ENCODE measurements at regions of chr20 and their contacts with region 1.

Region 1: GRCh38 chr20:58870239-58871014 is 17.9 kb downstream of the GNAS start:
- DNase-seq: peak in 9 of 10 donors; percentile 50 to 94 (median 73)

Region 2: DNA sequence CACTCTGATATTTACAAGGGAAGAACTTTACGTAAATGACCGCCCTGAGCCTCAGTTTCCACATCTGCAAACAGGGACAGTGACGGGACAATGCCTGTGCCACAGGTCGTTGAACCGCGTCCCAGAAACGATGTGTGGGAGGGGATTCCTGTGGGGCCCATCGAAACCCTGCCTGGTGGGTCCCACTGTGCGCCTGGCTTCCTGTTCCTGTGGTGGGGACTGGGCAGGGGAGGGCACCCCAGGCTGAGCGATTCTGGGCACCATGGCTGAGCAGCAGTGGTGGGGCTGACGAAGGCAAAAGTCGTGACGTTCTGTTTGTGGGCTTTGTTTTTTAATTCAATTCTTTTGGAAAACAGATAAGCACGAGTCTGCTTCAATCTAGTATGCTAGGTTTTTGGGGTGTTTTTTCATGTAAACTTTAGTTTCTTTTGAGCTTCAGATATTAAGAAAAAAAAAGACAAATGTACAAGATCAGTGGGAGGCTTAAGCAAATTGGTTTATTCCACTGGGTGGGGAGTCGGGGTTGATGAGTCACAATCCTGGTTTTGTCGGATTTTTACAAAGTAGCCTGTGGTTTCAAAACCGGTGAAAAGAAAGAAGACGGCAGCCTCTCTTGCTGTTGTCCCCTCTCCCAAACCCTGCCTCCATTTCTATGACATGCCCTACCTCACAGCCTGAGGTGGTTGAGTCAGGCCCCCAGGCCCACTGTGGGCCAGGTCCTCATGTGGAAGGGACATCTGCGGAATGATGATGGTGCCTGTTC is 60.1 kb before region 1 on chr20:
- intact Hi-C with region 1: no loop called
- DNase-seq: peak in 3 of 10 donors; percentile 27 to 65 (median 30)

Region 3: DNA sequence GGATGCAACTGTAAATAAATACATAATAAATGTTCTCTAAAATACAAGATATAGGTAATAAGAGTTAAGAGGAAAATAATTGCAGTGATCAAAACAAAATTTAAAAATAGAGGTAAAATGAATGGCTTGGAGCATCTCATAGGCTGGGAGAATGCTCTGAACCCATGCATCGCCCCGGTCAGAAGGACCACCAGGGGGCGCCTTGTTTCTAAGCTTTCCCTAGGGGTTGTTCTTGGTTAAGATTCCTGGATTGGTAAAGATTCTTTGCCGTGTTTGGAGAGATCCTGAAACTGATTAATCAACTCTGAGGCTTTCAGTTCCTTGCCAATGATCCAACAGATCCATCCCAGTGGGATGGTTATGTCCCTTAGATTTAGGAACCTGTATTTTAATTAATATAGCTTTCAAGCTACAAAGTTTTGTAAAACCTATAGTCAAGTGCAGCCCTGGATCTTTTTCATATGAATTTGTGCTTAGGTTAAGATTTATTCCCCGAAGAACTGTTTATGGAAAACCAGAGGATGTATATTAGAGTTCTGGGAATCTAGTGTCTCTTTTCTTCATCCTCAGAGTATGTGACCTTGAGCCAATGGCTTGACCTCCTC is 217.5 kb after region 1 on chr20:
- intact Hi-C with region 1: no loop called
- DNase-seq: peak; percentile 46 to 96 (median 88)

Region 4: DNA sequence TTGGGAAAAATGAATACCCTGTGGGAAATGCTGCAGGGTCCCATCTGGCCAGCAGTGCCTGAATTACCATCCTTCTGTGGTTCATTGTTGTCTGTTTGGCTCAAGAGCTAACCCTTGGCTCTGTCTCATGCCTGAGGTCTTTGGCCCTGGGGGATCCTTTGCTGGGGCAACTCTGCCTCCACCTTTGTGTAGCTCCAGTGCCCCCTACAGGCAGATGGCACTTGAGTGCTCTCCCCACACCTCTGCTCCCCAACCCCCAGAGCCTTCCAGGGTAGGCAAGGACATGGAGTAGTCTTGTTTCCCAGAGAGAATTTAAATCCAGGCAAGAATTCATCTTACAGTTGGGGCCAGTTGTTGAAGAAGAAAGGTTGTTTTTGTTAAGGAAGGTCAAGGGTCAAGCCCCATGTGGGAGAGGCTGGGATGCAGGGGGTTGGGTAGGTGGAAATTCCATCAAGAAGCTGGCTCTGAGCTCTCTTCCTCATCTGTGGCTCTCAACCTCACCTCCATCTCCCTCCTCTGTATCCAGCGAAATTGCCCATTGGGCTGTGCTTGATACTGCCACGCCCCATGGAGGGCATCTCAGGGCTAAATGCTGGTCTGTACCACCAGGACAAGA is 337.4 kb after region 1 on chr20:
- intact Hi-C with region 1: loop called (anchors 5 kb)
- DNase-seq: peak in 6 of 10 donors; percentile 54 to 92 (median 65)

Region 5: GRCh38 chr20:59222253-59223181 is 352.1 kb after region 1 on chr20:
- intact Hi-C with region 1: loop called (anchors 1 kb)
- DNase-seq: peak; percentile 60 to 97 (median 82)

Region 6: GRCh38 chr20:59403261-59403961 is 533.0 kb after region 1 on chr20:
- intact Hi-C with region 1: loop called (anchors 1 kb)
- DNase-seq: peak; percentile 51 to 96 (median 74)

Region 7: GRCh38 chr20:59455402-59456341 is 585.2 kb after region 1 on chr20:
- intact Hi-C with region 1: loop called (anchors 2 kb)
- DNase-seq: peak in 4 of 10 donors; percentile 14 to 62 (median 14)

Region 8: GRCh38 chr20:59495894-59496510 is 625.6 kb after region 1 on chr20:
- intact Hi-C with region 1: loop called (anchors 2 kb)
- DNase-seq: peak; percentile 57 to 96 (median 78)

Measured in posterior cingulate gyrus (tissue), 11 donors.